ENCODE measurements at regions of chr7 and their contacts with region 1.

Region 1: DNA sequence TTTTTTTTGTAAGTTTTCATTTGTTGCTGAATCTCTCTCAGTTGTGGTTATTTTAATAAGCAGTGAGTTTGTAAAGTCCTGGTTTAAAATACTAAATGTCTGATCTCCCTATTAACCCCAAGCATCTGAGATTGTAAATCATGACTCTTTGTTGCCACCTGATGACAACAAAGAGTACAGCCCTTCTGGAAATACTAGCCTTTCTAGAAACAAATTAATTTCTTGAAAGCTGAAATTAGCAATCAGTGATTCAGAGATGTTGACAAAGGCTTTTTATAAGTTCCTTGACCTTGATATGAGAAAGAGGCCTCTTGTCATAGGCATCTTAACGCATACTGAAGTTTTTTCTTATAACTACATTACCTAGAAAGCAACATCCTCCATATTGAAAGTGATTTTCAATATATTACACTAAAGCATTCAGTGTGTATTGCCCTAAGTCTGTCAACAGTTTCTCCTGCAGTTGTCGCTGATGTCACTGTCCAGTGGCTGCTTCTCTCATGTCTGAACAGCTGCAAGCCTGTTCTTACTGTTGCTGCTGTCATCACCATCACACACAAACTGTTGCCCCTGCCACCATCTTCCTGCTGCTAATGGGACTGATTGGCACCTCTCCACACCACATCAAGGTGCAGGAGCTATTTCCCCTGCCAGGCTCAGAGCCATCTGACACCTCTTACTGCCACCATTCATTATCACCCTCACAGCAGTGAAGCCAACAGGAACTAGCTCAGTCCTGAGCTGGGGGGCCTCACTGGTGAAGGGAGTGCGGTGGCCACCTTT is 95.1 kb upstream of the LRGUK start:
- DNase-seq: no peak
- ATAC-seq: peak; percentile 79

Region 2: GRCh38 chr7:132138817-132139216 is 1893.2 kb before region 1 on chr7:
- intact Hi-C with region 1: loop called (anchors 10 kb)
- DNase-seq: no peak
- ATAC-seq: no peak